Cardiac septum (tissue), 1 donor: ENCODE measurements at regions of chr2 and their contacts with region 1.

Region 1: DNA sequence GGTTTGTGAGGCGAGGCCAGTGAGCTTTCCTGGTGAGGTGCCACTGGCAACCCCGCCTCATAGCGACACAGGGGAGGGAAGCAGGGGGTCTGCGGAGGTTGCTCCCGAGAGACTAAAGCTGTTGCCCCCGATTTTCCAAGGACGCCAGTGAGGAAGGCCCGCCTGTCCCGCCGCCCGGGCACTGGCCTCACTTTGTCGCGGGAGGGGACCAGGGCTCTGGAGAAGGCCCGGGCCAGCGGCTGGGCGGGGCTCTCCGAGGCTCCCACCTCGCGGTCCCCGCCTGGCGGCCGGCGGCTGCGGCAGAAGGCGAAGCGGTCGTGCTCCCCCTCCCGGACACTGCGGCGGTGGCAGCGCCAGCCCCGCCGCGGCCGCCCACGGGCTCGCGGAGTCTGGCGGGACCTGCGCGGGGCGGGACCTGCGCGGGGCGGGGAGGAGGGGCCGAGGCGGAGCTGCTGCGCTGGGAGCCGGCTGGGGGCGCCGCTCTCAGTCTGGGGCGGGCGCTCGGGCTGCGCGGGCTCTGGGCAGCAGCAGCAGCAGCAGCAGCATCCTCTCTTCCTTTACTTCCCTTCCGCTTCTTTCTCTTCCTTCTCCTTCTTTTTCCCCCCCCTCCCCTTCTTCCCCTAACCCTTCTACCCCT is at the start of gene MAP2:
- DNase-seq: peak; percentile 92
- total RNA-seq, gene MAP2: 42.1 TPM

Region 2: GRCh38 chr2:209322041-209322440 is 101.6 kb before region 1 on chr2:
- intact Hi-C with region 1: no loop called
- DNase-seq: no peak

Region 3: GRCh38 chr2:209441541-209441940 is 17.9 kb after region 1 on chr2:
- intact Hi-C with region 1: loop called (anchors 2 kb)
- DNase-seq: no peak

Region 4: GRCh38 chr2:209495855-209496585 is 72.3 kb after region 1 on chr2:
- intact Hi-C with region 1: loop called (anchors 10 kb)
- DNase-seq: no peak

Region 5: GRCh38 chr2:209556354-209556961 is 132.8 kb after region 1 on chr2:
- intact Hi-C with region 1: loop called (anchors 2 kb)
- DNase-seq: no peak

Region 6: GRCh38 chr2:209685963-209686362 is 262.3 kb after region 1 on chr2:
- intact Hi-C with region 1: loop called (anchors 5 kb)
- DNase-seq: no peak